Endothelial cell of umbilical vein (primary cell): ENCODE measurements at regions of chr2 and their contacts with region 1.

Region 1: GRCh38 chr2:178700922-178701342 is 106.3 kb downstream of the TTN start:
- DNase-seq: peak; percentile 19
- H3K4me3 ChIP-seq: no peak overlapping the region
- H3K27ac ChIP-seq: no peak overlapping the region
- H3K4me1 ChIP-seq: no peaks in the 10 kb centered on the region
- H3K27me3 ChIP-seq: no peaks in the 10 kb centered on the region
- CTCF ChIP-seq: peak; percentile 66 to 76
- POLR2A ChIP-seq: no peak

Region 2: DNA sequence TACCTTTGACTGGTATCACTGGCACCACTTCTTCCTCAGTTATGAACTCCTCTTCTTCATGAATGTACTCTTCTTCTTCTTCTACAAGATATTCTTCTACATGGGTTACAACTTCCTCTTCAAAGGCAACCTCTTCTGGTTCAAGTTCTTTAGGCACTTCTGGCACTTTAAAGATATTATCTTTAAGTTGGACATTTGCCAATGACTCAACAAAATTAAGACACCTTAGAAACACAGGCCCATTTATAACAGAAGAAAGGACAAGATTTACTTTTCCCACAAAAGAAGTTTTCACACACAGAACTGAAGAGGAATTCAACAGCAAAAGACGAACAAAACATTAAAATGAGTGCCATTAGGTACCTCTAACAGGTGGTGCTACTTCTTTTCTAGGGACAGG is 21.0 kb before region 1 on chr2:
- CTCF ChIA-PET with region 1: interaction called, 17 read pairs
- POLR2A ChIA-PET with region 1: no interaction called
- dilution Hi-C with region 1: no loop called
- intact Hi-C with region 1: no loop called
- DNase-seq: no peak
- H3K4me3 ChIP-seq: no peak overlapping the region
- H3K27ac ChIP-seq: no peak overlapping the region
- H3K4me1 ChIP-seq: no peaks in the 10 kb centered on the region
- H3K27me3 ChIP-seq: no peaks in the 10 kb centered on the region
- CTCF ChIP-seq: no peak
- POLR2A ChIP-seq: no peak

Region 3: DNA sequence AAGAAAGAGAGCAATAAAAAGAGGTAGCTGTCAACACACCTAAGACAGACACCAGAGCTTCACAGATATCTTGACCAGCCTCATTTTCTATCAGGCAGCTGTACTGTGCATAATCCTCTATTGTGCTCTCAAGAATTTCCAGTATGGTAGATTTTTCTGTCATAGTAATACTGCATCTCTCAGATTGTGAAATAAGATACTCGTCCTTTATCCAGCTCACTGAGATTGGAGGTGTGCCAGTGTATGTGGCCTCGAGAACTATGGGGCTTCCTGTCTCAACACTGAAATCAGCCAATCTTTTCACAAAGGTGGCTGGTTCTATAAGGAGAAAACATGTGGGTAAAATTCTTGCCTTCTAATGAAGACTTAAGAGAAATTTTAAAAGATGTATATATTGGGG is 17.4 kb after region 1 on chr2:
- CTCF ChIA-PET with region 1: interaction called, 14 read pairs
- POLR2A ChIA-PET with region 1: no interaction called
- dilution Hi-C with region 1: no loop called
- intact Hi-C with region 1: no loop called
- DNase-seq: no peak
- H3K4me3 ChIP-seq: no peak overlapping the region
- H3K27ac ChIP-seq: no peak overlapping the region
- H3K4me1 ChIP-seq: no peaks in the 10 kb centered on the region
- H3K27me3 ChIP-seq: no peaks in the 10 kb centered on the region
- CTCF ChIP-seq: no peak
- POLR2A ChIP-seq: no peak

Region 4: GRCh38 chr2:179020156-179020750 is 319.3 kb after region 1 on chr2:
- CTCF ChIA-PET with region 1: interaction called, 11 read pairs
- POLR2A ChIA-PET with region 1: no interaction called
- dilution Hi-C with region 1: no loop called
- intact Hi-C with region 1: no loop called
- DNase-seq: peak; percentile 28
- H3K4me3 ChIP-seq: no peak overlapping the region
- H3K27ac ChIP-seq: no peak overlapping the region
- H3K4me1 ChIP-seq: no peaks in the 10 kb centered on the region
- H3K27me3 ChIP-seq: no peaks in the 10 kb centered on the region
- CTCF ChIP-seq: peak; percentile 43 to 56
- POLR2A ChIP-seq: no peak